ENCODE measurements at regions of chr4 and their contacts with region 1.

Region 1: DNA sequence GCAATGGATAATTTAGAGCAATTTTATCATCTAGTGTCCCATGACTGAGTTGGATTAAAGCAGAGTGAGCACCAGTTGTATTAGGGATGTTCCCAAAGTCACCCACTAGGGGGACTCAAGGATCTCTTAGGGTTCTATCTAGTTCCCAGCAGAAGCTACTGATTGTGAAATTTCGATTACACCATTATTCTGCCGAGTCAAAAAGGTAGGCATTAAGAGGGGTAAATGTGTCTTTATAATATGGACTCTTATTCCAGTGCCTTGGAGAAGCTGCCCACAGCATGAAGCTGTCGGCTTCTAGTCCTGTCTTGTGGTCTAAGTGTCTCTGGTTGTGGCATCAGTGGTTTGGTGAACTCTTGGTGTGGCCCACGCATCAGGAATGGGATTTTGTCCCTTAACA is 53.3 kb downstream of the RGS12 start:
- DNase-seq: peak; percentile 50
- ATAC-seq: peak; percentile 92
- H3K4me3 Mint-ChIP-seq: no peak overlapping the region
- H3K27ac Mint-ChIP-seq: no peak overlapping the region
- H3K4me1 Mint-ChIP-seq: peaks cover 17% of the 10 kb centered on the region
- H3K27me3 Mint-ChIP-seq: no peaks in the 10 kb centered on the region

Region 2: DNA sequence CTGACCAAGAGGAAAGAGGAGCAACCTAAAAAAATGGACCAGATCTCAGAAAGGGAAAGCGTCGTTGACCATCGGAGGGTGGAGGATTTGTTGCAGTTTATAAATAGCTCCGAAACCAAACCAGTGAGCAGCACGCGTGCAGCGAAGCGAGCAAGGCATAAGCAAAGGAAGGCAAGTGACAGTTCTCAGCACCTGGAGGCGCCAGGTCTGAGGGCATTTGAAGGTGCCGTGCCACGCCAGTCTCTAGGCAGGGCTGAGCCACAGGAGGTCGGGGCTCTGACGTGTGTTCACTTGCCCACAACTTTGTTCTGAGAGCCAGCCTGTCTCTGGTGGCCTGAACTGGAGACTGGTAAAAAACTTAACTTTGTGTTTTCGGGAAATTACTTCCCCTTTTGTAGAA is 649.7 kb before region 1 on chr4:
- CTCF ChIA-PET with region 1: no interaction called
- POLR2A ChIA-PET with region 1: no interaction called
- intact Hi-C with region 1: no loop called
- DNase-seq: no peak
- ATAC-seq: no peak
- H3K4me3 Mint-ChIP-seq: no peak overlapping the region
- H3K27ac Mint-ChIP-seq: peak overlapping the region; percentile 7
- H3K4me1 Mint-ChIP-seq: peaks cover 22% of the 10 kb centered on the region
- H3K27me3 Mint-ChIP-seq: no peaks in the 10 kb centered on the region

Region 3: GRCh38 chr4:3369781-3370674 is 23.9 kb after region 1 on chr4:
- CTCF ChIA-PET with region 1: interaction called, 11 read pairs
- POLR2A ChIA-PET with region 1: no interaction called
- intact Hi-C with region 1: no loop called
- DNase-seq: peak; percentile 64
- ATAC-seq: peak; percentile 70
- H3K4me3 Mint-ChIP-seq: peak overlapping the region; percentile 59
- H3K27ac Mint-ChIP-seq: peak overlapping the region; percentile 17
- H3K4me1 Mint-ChIP-seq: peaks cover 52% of the 10 kb centered on the region
- H3K27me3 Mint-ChIP-seq: peaks cover 22% of the 10 kb centered on the region

Region 4: GRCh38 chr4:3442959-3443749 is 97.0 kb after region 1 on chr4:
- CTCF ChIA-PET with region 1: interaction called, 23 read pairs
- POLR2A ChIA-PET with region 1: no interaction called
- intact Hi-C with region 1: loop called (anchors 1 kb)
- DNase-seq: peak; percentile 83
- ATAC-seq: peak; percentile 89
- H3K4me3 Mint-ChIP-seq: no peak overlapping the region
- H3K27ac Mint-ChIP-seq: no peak overlapping the region
- H3K4me1 Mint-ChIP-seq: no peaks in the 10 kb centered on the region
- H3K27me3 Mint-ChIP-seq: no peaks in the 10 kb centered on the region

Region 5: DNA sequence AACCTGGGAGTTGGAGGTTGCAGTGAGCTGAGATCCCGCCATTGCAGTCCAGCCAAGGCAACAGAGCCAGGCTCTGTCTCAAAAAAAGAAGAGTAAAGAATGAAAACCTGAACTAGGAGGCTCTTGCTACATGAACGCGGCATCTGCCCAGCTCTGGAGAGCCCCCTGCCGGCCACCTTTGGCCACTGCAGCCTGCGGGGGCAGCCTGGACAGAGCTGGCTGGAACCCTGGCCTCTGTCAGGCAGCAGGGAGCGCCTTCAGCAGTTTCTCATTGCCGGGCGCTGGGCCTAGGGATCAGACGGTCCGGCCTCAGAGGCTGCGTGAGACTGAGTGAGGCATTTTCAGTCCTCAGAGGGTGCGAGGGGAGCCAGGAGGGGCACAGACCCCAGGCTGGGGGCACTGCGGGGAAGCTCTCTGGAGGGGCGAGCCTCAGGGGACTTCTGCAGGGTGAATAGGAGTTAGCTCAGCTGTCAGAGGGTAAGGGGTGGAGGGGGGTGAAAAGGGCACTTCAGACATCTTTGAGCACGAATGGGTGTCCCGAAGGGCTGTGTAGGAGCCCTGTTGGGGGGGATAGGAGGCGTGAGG is 134.5 kb after region 1 on chr4:
- CTCF ChIA-PET with region 1: interaction called, 24 read pairs
- POLR2A ChIA-PET with region 1: no interaction called
- intact Hi-C with region 1: loop called in 1 of 2 experiments (anchors 1 kb)
- DNase-seq: peak; percentile 87
- ATAC-seq: peak; percentile 87
- H3K4me3 Mint-ChIP-seq: no peak overlapping the region
- H3K27ac Mint-ChIP-seq: no peak overlapping the region
- H3K4me1 Mint-ChIP-seq: no peaks in the 10 kb centered on the region
- H3K27me3 Mint-ChIP-seq: peaks cover 14% of the 10 kb centered on the region

Region 6: DNA sequence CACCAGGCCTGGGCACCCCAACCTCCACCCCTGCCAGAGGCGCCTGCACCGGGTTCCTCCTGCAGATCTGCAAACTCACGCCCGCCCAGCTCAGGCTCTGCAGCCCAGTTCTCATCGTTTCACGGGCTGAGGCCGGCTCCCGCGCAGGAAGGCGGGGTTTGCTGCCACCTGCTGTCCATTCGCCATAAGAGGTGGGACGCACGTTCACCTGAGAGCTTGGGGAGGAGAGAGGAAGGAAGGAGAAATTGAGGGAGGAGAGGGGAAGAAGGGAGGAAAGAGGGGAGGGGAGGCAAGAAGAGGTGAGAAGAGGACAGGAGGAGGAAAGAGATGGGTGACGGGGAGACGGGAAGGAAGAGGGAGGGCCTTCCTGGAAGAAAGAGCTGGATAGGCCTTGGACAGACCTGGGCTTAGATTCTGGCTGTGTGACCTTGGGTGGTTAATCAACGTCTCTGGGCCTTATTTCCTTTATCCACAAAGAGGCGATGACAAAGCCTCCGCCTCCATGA is 534.5 kb after region 1 on chr4:
- CTCF ChIA-PET with region 1: no interaction called
- POLR2A ChIA-PET with region 1: no interaction called
- intact Hi-C with region 1: loop called in 1 of 2 experiments (anchors 2 kb)
- DNase-seq: peak; percentile 87
- ATAC-seq: peak; percentile 85
- H3K4me3 Mint-ChIP-seq: no peak overlapping the region
- H3K27ac Mint-ChIP-seq: no peak overlapping the region
- H3K4me1 Mint-ChIP-seq: peaks cover 11% of the 10 kb centered on the region
- H3K27me3 Mint-ChIP-seq: peaks cover 29% of the 10 kb centered on the region